ENCODE measurements at regions of chr12 and their contacts with region 1.

Region 1: GRCh38 chr12:101823891-101824290 is 6.9 kb downstream of the GNPTAB start:
- DNase-seq: peak; percentile 74 to 87 (median 80)
- H3K4me3 ChIP-seq: no peak overlapping the region
- H3K4me3 Mint-ChIP-seq: peak overlapping the region in 7 of 8 donors; percentile 26 to 82 (median 69)
- H3K27ac ChIP-seq: no peak overlapping the region
- H3K27ac Mint-ChIP-seq: peak overlapping the region; percentile 64 to 95 (median 81)
- H3K4me1 ChIP-seq: peaks cover 44% of the 10 kb centered on the region
- H3K4me1 Mint-ChIP-seq: peaks cover 38 to 71% (median 51%) of the 10 kb centered on the region in 4 donors
- H3K27me3 ChIP-seq: no peaks in the 10 kb centered on the region
- H3K27me3 Mint-ChIP-seq: no peaks in the 10 kb centered on the region

Region 2: DNA sequence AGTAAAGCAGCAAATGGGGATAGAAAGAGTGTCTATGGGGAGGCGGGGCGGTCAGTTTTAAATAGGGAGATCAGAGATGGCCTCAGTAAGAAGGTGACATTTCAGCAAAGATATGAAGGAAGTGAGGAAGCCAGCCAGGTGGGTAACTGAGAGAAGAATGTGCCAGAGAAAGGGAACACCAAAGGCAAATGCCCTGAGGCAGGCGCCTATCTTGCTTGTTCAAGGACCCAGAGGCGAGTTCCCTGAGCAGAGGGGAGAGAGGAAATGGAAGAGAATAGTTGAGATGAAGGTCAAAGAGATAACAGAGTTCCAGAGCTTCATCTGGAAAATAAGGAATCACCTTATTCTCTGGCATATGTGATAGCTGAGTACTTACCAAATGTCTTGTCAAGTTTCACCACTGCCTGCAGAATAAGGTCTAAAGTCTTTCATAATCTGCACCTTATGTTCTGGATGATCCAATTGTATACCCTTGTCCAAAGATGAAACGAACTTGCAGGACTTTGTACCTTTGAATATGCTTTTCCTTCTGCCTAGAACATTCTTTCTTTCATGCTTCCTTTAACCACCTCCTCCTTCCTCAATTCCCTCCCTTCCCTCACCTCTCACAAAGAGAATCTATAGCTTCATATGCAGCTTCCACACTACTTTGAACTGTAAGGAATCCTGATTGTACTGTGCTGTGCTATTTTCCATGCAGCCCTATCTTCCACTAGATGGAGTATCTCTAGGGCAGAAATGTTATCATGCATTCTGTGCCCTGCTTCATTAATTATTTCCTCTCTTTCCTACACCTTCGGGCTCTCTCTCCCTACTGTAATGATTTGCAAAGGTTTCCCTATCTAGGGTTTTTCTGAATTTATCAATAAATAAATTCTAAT is 31.6 kb before region 1 on chr12:
- CTCF ChIA-PET with region 1: interaction called, 74 read pairs
- POLR2A ChIA-PET with region 1: interaction called, 3 read pairs
- intact Hi-C with region 1: no loop called
- DNase-seq: peak in 1 of 5 donors; percentile 6
- H3K4me3 ChIP-seq: no peak overlapping the region
- H3K4me3 Mint-ChIP-seq: no peak overlapping the region
- H3K27ac ChIP-seq: no peak overlapping the region
- H3K27ac Mint-ChIP-seq: peak overlapping the region in 5 of 7 donors; percentile 18 to 77 (median 47)
- H3K4me1 ChIP-seq: peaks cover 5% of the 10 kb centered on the region
- H3K4me1 Mint-ChIP-seq: peaks cover 5 to 13% (median 10%) of the 10 kb centered on the region in 4 donors
- H3K27me3 ChIP-seq: no peaks in the 10 kb centered on the region
- H3K27me3 Mint-ChIP-seq: no peaks in the 10 kb centered on the region

Region 3: GRCh38 chr12:101857043-101857558 is 33.2 kb after region 1 on chr12:
- CTCF ChIA-PET with region 1: no interaction called
- POLR2A ChIA-PET with region 1: no interaction called
- intact Hi-C with region 1: no loop called
- DNase-seq: no peak
- H3K4me3 ChIP-seq: no peak overlapping the region
- H3K4me3 Mint-ChIP-seq: no peak overlapping the region
- H3K27ac ChIP-seq: no peak overlapping the region
- H3K27ac Mint-ChIP-seq: no peak overlapping the region
- H3K4me1 ChIP-seq: no peaks in the 10 kb centered on the region
- H3K4me1 Mint-ChIP-seq: no peaks in the 10 kb centered on the region
- H3K27me3 ChIP-seq: no peaks in the 10 kb centered on the region
- H3K27me3 Mint-ChIP-seq: no peaks in the 10 kb centered on the region

Measured in CD4-positive, alpha-beta memory T cell (primary cell).